CD8-positive, alpha-beta T cell (primary cell): ENCODE measurements at regions of chr7 and their contacts with region 1.

Region 1: GRCh38 chr7:16564909-16565426 is 38.3 kb downstream of the LRRC72 start:
- DNase-seq: peak in 2 of 9 experiments; percentile 54 to 65
- ATAC-seq: peak; percentile 56
- H3K4me3 ChIP-seq: no peak overlapping the region
- H3K4me3 Mint-ChIP-seq: no peak overlapping the region
- H3K27ac ChIP-seq: no peak overlapping the region
- H3K27ac Mint-ChIP-seq: no peak overlapping the region
- H3K4me1 ChIP-seq: peaks cover 8% of the 10 kb centered on the region
- H3K4me1 Mint-ChIP-seq: peaks cover 21% of the 10 kb centered on the region
- H3K27me3 ChIP-seq: no peaks in the 10 kb centered on the region
- H3K27me3 Mint-ChIP-seq: peaks cover 3% of the 10 kb centered on the region
- CTCF ChIP-seq: peak; percentile 85

Region 2: DNA sequence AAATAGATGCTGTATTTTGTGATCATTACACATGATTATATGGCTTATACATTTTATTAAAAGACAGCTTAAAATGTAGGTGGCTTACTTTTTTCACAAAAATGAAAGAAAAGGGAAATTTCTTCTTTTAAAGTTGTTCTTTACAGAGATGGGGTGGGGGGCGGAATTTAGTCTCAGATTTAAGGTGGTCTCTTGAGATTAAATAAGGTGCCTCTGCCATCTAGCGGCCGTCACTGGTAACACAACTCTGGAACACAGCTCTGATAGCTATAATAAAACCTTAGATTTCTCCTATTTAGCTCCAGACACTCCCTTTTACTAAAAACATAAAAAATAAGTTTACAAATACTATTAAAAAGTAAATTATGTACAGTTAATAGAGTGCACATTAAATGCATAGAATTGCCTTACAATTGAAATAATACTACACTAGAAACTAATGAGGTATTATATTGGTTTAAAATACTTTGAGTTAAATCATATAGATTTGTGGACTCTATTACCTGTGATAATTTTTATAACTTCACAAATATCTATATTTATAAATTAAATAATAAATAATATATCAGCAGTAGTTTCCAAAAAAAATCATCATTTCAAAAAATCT is 1873.3 kb before region 1 on chr7:
- CTCF ChIA-PET with region 1: no interaction called
- POLR2A ChIA-PET with region 1: no interaction called
- intact Hi-C with region 1: loop called in 1 of 2 experiments (anchors 10 kb)
- DNase-seq: peak; percentile 1 to 65 (median 47)
- ATAC-seq: no peak
- H3K4me3 ChIP-seq: no peak overlapping the region
- H3K4me3 Mint-ChIP-seq: no peak overlapping the region
- H3K27ac ChIP-seq: no peak overlapping the region
- H3K27ac Mint-ChIP-seq: no peak overlapping the region
- H3K4me1 ChIP-seq: no peaks in the 10 kb centered on the region
- H3K4me1 Mint-ChIP-seq: no peaks in the 10 kb centered on the region
- H3K27me3 ChIP-seq: no peaks in the 10 kb centered on the region
- H3K27me3 Mint-ChIP-seq: no peaks in the 10 kb centered on the region
- CTCF ChIP-seq: peak; percentile 84

Region 3: DNA sequence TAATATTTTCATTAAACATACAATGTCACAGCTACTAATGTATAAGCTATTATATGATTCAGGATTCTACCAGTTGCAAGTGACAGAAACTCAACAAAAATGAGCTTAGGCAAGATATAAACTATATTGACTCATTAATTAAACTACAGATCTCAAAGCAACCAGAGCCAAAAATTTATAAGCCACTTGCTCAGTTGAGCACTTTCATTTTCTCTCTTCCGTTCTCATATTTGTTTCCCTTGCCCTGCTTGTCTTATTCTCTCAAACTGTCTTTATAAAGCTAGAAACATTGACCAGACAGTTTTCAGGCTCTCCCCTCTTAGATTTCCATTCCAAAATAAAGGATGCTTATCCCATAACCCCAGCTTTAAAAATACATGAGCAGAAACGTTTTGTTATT is 1602.2 kb before region 1 on chr7:
- CTCF ChIA-PET with region 1: no interaction called
- POLR2A ChIA-PET with region 1: no interaction called
- intact Hi-C with region 1: no loop called
- DNase-seq: no peak
- ATAC-seq: no peak
- H3K4me3 ChIP-seq: no peak overlapping the region
- H3K4me3 Mint-ChIP-seq: no peak overlapping the region
- H3K27ac ChIP-seq: no peak overlapping the region
- H3K27ac Mint-ChIP-seq: no peak overlapping the region
- H3K4me1 ChIP-seq: no peaks in the 10 kb centered on the region
- H3K4me1 Mint-ChIP-seq: no peaks in the 10 kb centered on the region
- H3K27me3 ChIP-seq: no peaks in the 10 kb centered on the region
- H3K27me3 Mint-ChIP-seq: no peaks in the 10 kb centered on the region
- CTCF ChIP-seq: no peak

Region 4: GRCh38 chr7:16078076-16078952 is 486.7 kb before region 1 on chr7:
- CTCF ChIA-PET with region 1: interaction called, 49 read pairs
- POLR2A ChIA-PET with region 1: no interaction called
- intact Hi-C with region 1: loop called (anchors 1 kb)
- DNase-seq: peak in 3 of 9 experiments; percentile 10 to 61 (median 51)
- ATAC-seq: no peak
- H3K4me3 ChIP-seq: no peak overlapping the region
- H3K4me3 Mint-ChIP-seq: no peak overlapping the region
- H3K27ac ChIP-seq: no peak overlapping the region
- H3K27ac Mint-ChIP-seq: no peak overlapping the region
- H3K4me1 ChIP-seq: no peaks in the 10 kb centered on the region
- H3K4me1 Mint-ChIP-seq: peaks cover 3% of the 10 kb centered on the region
- H3K27me3 ChIP-seq: no peaks in the 10 kb centered on the region
- H3K27me3 Mint-ChIP-seq: no peaks in the 10 kb centered on the region
- CTCF ChIP-seq: peak; percentile 54

Region 5: DNA sequence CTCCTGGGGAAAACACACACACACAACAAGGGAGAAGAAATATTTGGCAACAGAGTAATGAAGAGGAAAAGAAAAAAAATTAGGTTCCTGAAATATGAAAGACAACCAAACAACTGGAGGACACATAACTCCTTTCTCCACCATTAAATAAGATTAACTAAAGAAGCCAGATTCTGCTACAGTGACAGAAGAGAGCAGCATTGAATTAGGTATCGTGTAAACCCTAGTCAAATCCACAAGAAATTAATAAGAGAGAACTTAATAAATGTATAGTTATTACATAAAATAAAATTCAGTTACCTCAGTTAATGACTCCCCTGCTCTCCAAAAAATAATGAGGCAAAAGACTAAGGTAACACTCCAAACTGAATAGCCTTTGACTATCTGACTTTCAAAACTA is 450.3 kb before region 1 on chr7:
- CTCF ChIA-PET with region 1: interaction called, 5 read pairs
- POLR2A ChIA-PET with region 1: no interaction called
- intact Hi-C with region 1: loop called in 1 of 2 experiments (anchors 1 kb)
- DNase-seq: peak in 2 of 9 experiments; percentile 38 to 40
- ATAC-seq: no peak
- H3K4me3 ChIP-seq: no peak overlapping the region
- H3K4me3 Mint-ChIP-seq: no peak overlapping the region
- H3K27ac ChIP-seq: no peak overlapping the region
- H3K27ac Mint-ChIP-seq: no peak overlapping the region
- H3K4me1 ChIP-seq: no peaks in the 10 kb centered on the region
- H3K4me1 Mint-ChIP-seq: no peaks in the 10 kb centered on the region
- H3K27me3 ChIP-seq: no peaks in the 10 kb centered on the region
- H3K27me3 Mint-ChIP-seq: no peaks in the 10 kb centered on the region
- CTCF ChIP-seq: no peak

Region 6: DNA sequence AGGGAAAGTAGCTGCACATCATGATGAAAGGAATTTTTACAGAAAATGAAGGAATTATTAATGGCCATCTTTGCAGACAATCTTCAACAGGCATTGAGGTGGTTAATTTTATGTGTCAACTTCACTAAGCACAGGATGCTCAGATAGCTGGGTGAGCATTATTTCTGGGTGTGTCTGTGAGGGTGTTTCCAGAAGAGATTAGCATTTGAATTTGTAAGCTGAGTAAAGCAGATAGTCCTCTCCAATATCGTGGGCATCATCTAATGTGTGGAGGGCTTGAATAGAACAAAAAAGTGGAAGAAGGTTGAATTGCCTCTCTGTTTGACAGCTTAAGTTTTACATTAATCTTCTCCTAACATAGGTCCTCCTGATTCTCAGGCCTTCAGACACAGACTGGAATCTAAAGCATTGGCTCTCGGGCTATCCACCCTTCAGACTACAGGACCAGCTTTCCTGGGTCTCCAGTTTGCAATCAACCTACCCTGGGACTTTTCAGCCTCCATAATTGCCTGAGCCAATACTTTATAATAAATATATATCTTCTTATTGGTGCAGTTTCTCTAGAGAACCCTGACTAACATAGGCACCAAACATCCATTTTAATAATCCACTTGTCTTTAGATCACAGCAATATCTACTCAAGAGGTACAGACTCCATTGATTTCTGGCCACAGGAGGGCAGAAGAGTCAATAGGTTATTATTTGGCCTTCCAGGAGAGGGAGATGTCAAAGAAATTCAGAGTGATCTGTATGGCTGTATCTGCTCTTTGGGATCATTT is 133.1 kb before region 1 on chr7:
- CTCF ChIA-PET with region 1: interaction called, 69 read pairs
- POLR2A ChIA-PET with region 1: interaction called, 3 read pairs
- intact Hi-C with region 1: loop called (anchors 1 kb)
- DNase-seq: peak in 4 of 9 experiments; percentile 20 to 68 (median 44)
- ATAC-seq: peak; percentile 83
- H3K4me3 ChIP-seq: no peak overlapping the region
- H3K4me3 Mint-ChIP-seq: no peak overlapping the region
- H3K27ac ChIP-seq: no peak overlapping the region
- H3K27ac Mint-ChIP-seq: no peak overlapping the region
- H3K4me1 ChIP-seq: no peaks in the 10 kb centered on the region
- H3K4me1 Mint-ChIP-seq: no peaks in the 10 kb centered on the region
- H3K27me3 ChIP-seq: no peaks in the 10 kb centered on the region
- H3K27me3 Mint-ChIP-seq: peaks cover 3% of the 10 kb centered on the region
- CTCF ChIP-seq: peak; percentile 37

Region 7: GRCh38 chr7:16554518-16555236 is 10.3 kb before region 1 on chr7:
- CTCF ChIA-PET with region 1: interaction called, 17 read pairs
- POLR2A ChIA-PET with region 1: interaction called, 3 read pairs
- intact Hi-C with region 1: no loop called
- DNase-seq: no peak
- ATAC-seq: no peak
- H3K4me3 ChIP-seq: no peak overlapping the region
- H3K4me3 Mint-ChIP-seq: no peak overlapping the region
- H3K27ac ChIP-seq: no peak overlapping the region
- H3K27ac Mint-ChIP-seq: no peak overlapping the region
- H3K4me1 ChIP-seq: no peaks in the 10 kb centered on the region
- H3K4me1 Mint-ChIP-seq: no peaks in the 10 kb centered on the region
- H3K27me3 ChIP-seq: no peaks in the 10 kb centered on the region
- H3K27me3 Mint-ChIP-seq: peaks cover 2% of the 10 kb centered on the region
- CTCF ChIP-seq: no peak

Region 8: GRCh38 chr7:16978358-16979244 is 413.6 kb after region 1 on chr7:
- CTCF ChIA-PET with region 1: no interaction called
- POLR2A ChIA-PET with region 1: no interaction called
- intact Hi-C with region 1: no loop called
- DNase-seq: no peak
- ATAC-seq: no peak
- H3K4me3 ChIP-seq: no peak overlapping the region
- H3K4me3 Mint-ChIP-seq: no peak overlapping the region
- H3K27ac ChIP-seq: no peak overlapping the region
- H3K27ac Mint-ChIP-seq: no peak overlapping the region
- H3K4me1 ChIP-seq: no peaks in the 10 kb centered on the region
- H3K4me1 Mint-ChIP-seq: peaks cover 9% of the 10 kb centered on the region
- H3K27me3 ChIP-seq: peaks cover 0 to 2% of the 10 kb centered on the region in 2 experiments
- H3K27me3 Mint-ChIP-seq: peaks cover 11% of the 10 kb centered on the region
- CTCF ChIP-seq: no peak